Breast epithelium (tissue), 4 donors: ENCODE measurements at regions of chr2 and their contacts with region 1.

Region 1: GRCh38 chr2:32647180-32647651 is 19.4 kb downstream of the TTC27 start:
- DNase-seq: no peak
- H3K4me3 ChIP-seq: no peak overlapping the region
- H3K27ac ChIP-seq: no peak overlapping the region
- H3K4me1 ChIP-seq: no peaks in the 10 kb centered on the region
- H3K27me3 ChIP-seq: no peaks in the 10 kb centered on the region
- CTCF ChIP-seq: no peak
- POLR2A ChIP-seq: no peak

Region 2: GRCh38 chr2:32633040-32633439 is 14.2 kb before region 1 on chr2:
- intact Hi-C with region 1: loop called (anchors 1 kb)
- DNase-seq: no peak
- H3K4me3 ChIP-seq: no peak overlapping the region
- H3K27ac ChIP-seq: no peak overlapping the region
- H3K4me1 ChIP-seq: peaks cover 0 to 7% of the 10 kb centered on the region in 2 donors
- H3K27me3 ChIP-seq: no peaks in the 10 kb centered on the region
- CTCF ChIP-seq: no peak
- POLR2A ChIP-seq: no peak

Region 3: DNA sequence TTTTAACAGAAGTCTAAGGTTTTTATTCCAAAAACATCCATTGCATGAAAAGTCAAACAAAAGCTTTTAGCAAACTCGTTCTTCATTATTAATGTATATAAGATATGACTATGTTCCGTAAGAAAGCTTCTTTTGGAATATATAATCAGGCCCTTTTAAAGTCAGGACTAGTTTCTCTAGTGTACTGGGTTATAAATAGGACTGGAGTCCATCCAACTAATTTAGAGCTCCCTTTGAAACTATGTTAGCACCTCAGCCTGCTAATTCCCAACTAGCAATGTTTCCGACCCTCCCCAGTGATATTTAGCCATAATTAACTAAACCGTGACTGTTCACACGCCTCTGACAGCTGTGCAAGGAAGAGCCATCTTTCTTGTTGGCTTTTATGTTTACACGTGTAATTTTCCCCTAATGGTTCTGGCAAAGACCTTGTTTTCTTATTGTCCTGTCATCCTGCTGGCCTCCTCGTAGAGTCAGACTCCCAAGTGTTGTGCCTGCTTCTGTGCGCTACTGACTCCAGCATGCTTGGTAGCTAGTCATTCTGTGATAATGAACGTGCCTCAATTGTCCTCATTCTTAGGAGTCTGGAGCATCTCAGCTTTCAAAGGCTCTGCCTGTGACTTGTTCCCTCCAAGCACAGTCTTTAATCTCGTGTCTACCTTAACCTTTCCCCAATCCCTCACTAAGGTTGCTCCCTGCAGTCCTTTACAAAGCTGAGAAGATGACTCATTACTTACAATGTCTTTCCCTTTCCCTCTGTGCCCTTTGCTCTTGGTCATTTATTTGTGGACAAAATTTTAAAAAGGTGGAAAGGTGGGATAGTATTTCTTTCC is 657.0 kb after region 1 on chr2:
- intact Hi-C with region 1: no loop called
- DNase-seq: no peak
- H3K4me3 ChIP-seq: no peak overlapping the region
- H3K27ac ChIP-seq: no peak overlapping the region
- H3K4me1 ChIP-seq: no peaks in the 10 kb centered on the region
- H3K27me3 ChIP-seq: no peaks in the 10 kb centered on the region
- CTCF ChIP-seq: no peak
- POLR2A ChIP-seq: no peak